Activated CD4-positive, alpha-beta T cell treated with anti-CD3 and anti-CD28 coated beads for 36 hours (primary cell): ENCODE measurements at regions of chr12 and their contacts with region 1.

Region 1: GRCh38 chr12:57005980-57006808 is at the start of gene ZBTB39:
- DNase-seq: peak; percentile 80
- ATAC-seq: peak; percentile 69
- H3K4me3 Mint-ChIP-seq: peak within 1 kb of the TSS; percentile 79
- H3K27ac Mint-ChIP-seq: peak within 1 kb of the TSS; percentile 78
- H3K4me1 Mint-ChIP-seq: peaks cover 64% of the 10 kb centered on the region
- H3K27me3 Mint-ChIP-seq: no peaks in the 10 kb centered on the region
- total RNA-seq, gene ZBTB39: 6.4 to 6.6 TPM

Region 2: GRCh38 chr12:56751712-56752598 is 254.2 kb before region 1 on chr12 and contains the start of gene PRIM1:
- CTCF ChIA-PET with region 1: interaction called, 105 read pairs
- POLR2A ChIA-PET with region 1: no interaction called
- intact Hi-C with region 1: loop called (anchors 1 kb)
- DNase-seq: peak; percentile 95
- ATAC-seq: peak; percentile 91
- H3K4me3 Mint-ChIP-seq: peak within 1 kb of the TSS; percentile 84
- H3K27ac Mint-ChIP-seq: peak within 1 kb of the TSS; percentile 99
- H3K4me1 Mint-ChIP-seq: peaks cover 32% of the 10 kb centered on the region
- H3K27me3 Mint-ChIP-seq: no peaks in the 10 kb centered on the region
- total RNA-seq, gene PRIM1: 81.3 to 83.7 TPM

Region 3: DNA sequence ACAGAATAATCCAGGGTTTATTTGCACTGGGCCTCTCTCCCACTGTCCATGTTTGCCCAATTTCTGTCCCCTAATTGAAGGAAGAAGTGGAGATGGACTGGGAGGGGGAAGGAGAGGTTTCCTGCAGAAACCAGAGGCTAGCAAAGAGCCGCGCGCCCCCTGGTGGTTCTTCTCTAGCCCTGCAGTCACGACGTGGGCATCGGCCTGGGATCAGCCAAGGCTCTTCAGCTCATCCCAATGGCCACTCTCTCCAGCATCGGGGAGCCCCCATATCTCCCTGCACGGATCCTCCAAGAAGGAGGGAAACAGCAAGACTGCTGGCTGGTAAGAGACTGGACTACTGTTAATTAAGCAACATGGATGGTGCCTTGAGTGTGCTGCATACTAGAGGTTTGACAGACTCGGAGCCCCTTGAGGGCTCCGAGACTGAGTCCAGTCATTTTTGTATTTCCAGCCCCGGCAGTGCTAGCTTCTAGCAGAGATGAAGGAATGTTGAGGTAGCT is 18.6 kb before region 1 on chr12:
- CTCF ChIA-PET with region 1: interaction called, 77 read pairs
- POLR2A ChIA-PET with region 1: interaction called, 3 read pairs
- intact Hi-C with region 1: no loop called
- DNase-seq: peak; percentile 87
- ATAC-seq: peak; percentile 76
- H3K4me3 Mint-ChIP-seq: no peak overlapping the region
- H3K27ac Mint-ChIP-seq: no peak overlapping the region
- H3K4me1 Mint-ChIP-seq: peaks cover 11% of the 10 kb centered on the region
- H3K27me3 Mint-ChIP-seq: no peaks in the 10 kb centered on the region

Region 4: GRCh38 chr12:57063991-57064685 is 57.9 kb after region 1 on chr12:
- CTCF ChIA-PET with region 1: interaction called, 207 read pairs
- POLR2A ChIA-PET with region 1: no interaction called
- intact Hi-C with region 1: loop called (anchors 1 kb)
- DNase-seq: peak; percentile 80
- ATAC-seq: peak; percentile 79
- H3K4me3 Mint-ChIP-seq: peak overlapping the region; percentile 76
- H3K27ac Mint-ChIP-seq: peak overlapping the region; percentile 98
- H3K4me1 Mint-ChIP-seq: peaks cover 66% of the 10 kb centered on the region
- H3K27me3 Mint-ChIP-seq: no peaks in the 10 kb centered on the region

Region 5: DNA sequence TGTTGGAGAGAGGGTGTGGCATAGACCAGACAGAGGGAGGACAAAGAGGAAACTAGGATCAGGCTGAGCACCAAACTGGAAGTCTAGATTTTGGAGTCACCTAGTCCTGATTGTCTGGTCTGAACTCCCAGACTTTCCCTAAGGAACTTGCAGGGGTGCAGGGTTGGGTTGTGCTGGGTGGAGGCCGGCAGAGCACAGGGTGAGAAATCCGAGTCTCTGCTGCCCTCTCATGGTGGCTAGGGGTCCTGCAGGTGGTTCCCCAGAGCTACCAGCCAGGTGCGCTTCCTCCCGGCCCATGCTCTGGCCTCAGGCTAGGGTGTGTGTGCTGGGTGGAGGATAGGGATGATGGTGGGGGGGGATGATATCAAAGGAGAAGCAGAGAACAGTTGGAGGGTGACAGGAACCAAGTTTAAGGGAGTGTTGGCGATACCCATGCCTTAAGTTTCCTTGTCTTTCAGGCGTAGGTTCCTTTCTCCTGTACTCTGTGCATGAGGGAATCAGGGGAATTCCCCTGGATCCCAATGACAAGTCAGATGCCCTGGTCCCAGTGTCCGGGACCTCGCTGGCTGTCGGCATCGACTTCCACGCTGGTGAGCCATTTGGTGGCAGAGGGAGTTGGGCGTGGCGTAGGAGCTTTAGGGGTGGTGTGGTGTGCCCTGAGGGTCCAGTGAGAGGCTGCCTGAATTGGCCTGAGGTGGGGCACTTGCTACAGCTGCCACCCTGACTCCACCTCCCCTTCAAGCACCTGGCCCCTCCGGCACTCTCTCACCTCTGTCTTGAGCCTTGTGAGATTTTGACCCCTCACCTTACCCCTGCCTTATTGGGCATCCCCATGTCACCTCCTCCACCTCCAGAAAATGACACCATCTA is 177.0 kb after region 1 on chr12:
- CTCF ChIA-PET with region 1: interaction called, 4 read pairs
- POLR2A ChIA-PET with region 1: no interaction called
- intact Hi-C with region 1: loop called (anchors 1 to 5 kb)
- DNase-seq: peak; percentile 89
- ATAC-seq: peak; percentile 99
- H3K4me3 Mint-ChIP-seq: no peak overlapping the region
- H3K27ac Mint-ChIP-seq: no peak overlapping the region
- H3K4me1 Mint-ChIP-seq: peaks cover 2% of the 10 kb centered on the region
- H3K27me3 Mint-ChIP-seq: no peaks in the 10 kb centered on the region